B cell (primary cell): ENCODE measurements at regions of chr9 and their contacts with region 1.

Region 1: GRCh38 chr9:94920398-94921091 is 194.0 kb downstream of the AOPEP start:
- DNase-seq: no peak
- ATAC-seq: no peak
- H3K4me3 ChIP-seq: no peak overlapping the region
- H3K4me3 Mint-ChIP-seq: no peak overlapping the region
- H3K27ac ChIP-seq: no peak overlapping the region
- H3K27ac Mint-ChIP-seq: no peak overlapping the region
- H3K4me1 ChIP-seq: no peaks in the 10 kb centered on the region
- H3K4me1 Mint-ChIP-seq: peaks cover 8% of the 10 kb centered on the region
- H3K27me3 ChIP-seq: no peaks in the 10 kb centered on the region
- H3K27me3 Mint-ChIP-seq: no peaks in the 10 kb centered on the region
- CTCF ChIP-seq: no peak

Region 2: DNA sequence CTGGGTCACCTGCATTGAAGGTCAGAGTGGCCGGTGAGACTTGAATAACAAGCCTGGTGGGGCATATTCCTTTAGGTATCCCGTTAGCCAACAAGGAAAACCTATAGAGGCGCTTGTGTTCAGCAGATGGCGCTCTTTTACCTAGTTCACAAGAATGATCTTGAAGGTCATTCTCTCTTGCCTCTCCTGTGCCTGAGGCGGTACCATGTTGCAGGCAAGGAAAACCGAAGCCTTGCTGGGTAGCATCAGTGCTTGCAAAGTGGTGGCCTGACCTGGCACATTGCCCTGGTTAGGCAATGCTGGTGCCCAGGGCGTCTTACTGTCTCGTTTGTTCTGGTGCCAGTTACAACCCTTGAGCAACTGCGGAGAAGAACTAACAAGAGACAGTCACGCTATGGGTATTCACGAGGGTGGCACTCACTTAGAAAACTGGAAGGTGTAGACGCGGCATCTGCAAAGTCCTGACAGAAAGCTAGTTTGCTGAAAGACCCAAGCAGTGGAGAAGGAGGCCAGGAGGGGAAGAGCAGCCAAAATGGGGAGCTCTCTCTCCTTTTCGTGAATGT is 137.4 kb before region 1 on chr9:
- CTCF ChIA-PET with region 1: interaction called, 72 read pairs
- POLR2A ChIA-PET with region 1: no interaction called
- intact Hi-C with region 1: no loop called
- DNase-seq: peak; percentile 53
- ATAC-seq: peak; percentile 47
- H3K4me3 ChIP-seq: no peak overlapping the region
- H3K4me3 Mint-ChIP-seq: no peak overlapping the region
- H3K27ac ChIP-seq: no peak overlapping the region
- H3K27ac Mint-ChIP-seq: no peak overlapping the region
- H3K4me1 ChIP-seq: no peaks in the 10 kb centered on the region
- H3K4me1 Mint-ChIP-seq: peaks cover 7% of the 10 kb centered on the region
- H3K27me3 ChIP-seq: no peaks in the 10 kb centered on the region
- H3K27me3 Mint-ChIP-seq: no peaks in the 10 kb centered on the region
- CTCF ChIP-seq: peak; percentile 59

Region 3: DNA sequence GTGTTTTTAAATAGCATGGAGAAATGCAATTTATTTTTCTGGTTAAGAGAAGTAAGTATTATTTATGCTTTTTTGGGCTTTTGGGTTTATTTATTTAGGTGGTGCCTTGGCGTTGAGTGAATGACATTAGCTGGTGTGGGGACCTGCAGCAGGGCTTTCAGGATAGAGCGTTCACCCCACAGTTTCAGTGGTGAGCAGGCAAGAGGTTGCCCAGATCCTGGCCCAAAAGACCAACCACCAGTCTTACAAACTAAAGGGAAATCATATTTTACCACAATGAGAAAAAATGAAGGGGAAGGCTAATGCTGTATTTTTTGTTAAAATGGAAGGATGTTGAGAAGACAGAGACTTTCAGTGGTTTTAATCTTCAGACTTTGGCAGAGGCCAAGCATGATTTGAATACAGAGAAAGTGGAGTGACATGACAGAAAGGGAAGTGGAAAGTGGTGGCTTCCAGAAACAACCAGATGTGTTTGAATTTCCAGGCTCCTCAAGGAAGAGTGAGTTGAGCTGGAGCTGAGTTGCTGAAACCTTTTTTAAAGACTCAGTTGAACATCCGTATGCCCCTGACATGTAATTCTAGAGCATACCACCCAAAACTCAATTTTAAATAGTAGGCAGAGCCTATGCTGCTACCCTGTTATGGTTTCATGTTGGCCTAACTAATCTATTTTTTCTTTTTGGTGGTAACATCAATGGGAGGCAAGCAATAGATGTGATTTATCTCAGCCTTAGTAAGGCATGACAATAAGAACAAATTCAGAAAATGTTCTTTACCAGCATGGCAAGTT is 99.3 kb before region 1 on chr9:
- CTCF ChIA-PET with region 1: no interaction called
- POLR2A ChIA-PET with region 1: no interaction called
- intact Hi-C with region 1: no loop called
- DNase-seq: peak; percentile 11
- ATAC-seq: no peak
- H3K4me3 ChIP-seq: no peak overlapping the region
- H3K4me3 Mint-ChIP-seq: no peak overlapping the region
- H3K27ac ChIP-seq: no peak overlapping the region
- H3K27ac Mint-ChIP-seq: peak overlapping the region; percentile 70
- H3K4me1 ChIP-seq: peaks cover 0 to 6% of the 10 kb centered on the region in 2 donors
- H3K4me1 Mint-ChIP-seq: peaks cover 8% of the 10 kb centered on the region
- H3K27me3 ChIP-seq: no peaks in the 10 kb centered on the region
- H3K27me3 Mint-ChIP-seq: no peaks in the 10 kb centered on the region
- CTCF ChIP-seq: no peak

Region 4: GRCh38 chr9:94860968-94861871 is 59.3 kb before region 1 on chr9:
- CTCF ChIA-PET with region 1: interaction called, 8 read pairs
- POLR2A ChIA-PET with region 1: no interaction called
- intact Hi-C with region 1: loop called (anchors 5 kb)
- DNase-seq: peak; percentile 90
- ATAC-seq: peak; percentile 91
- H3K4me3 ChIP-seq: peak overlapping the region in 3 of 5 experiments; percentile 17 to 42 (median 22)
- H3K4me3 Mint-ChIP-seq: peak overlapping the region; percentile 65
- H3K27ac ChIP-seq: peak overlapping the region in 1 of 2 donors; percentile 10
- H3K27ac Mint-ChIP-seq: peak overlapping the region; percentile 81
- H3K4me1 ChIP-seq: peaks cover 25 to 26% of the 10 kb centered on the region in 2 donors
- H3K4me1 Mint-ChIP-seq: peaks cover 45% of the 10 kb centered on the region
- H3K27me3 ChIP-seq: no peaks in the 10 kb centered on the region
- H3K27me3 Mint-ChIP-seq: no peaks in the 10 kb centered on the region
- CTCF ChIP-seq: no peak

Region 5: GRCh38 chr9:94882966-94883641 is 37.4 kb before region 1 on chr9:
- CTCF ChIA-PET with region 1: interaction called, 10 read pairs
- POLR2A ChIA-PET with region 1: no interaction called
- intact Hi-C with region 1: no loop called
- DNase-seq: no peak
- ATAC-seq: no peak
- H3K4me3 ChIP-seq: no peak overlapping the region
- H3K4me3 Mint-ChIP-seq: no peak overlapping the region
- H3K27ac ChIP-seq: no peak overlapping the region
- H3K27ac Mint-ChIP-seq: no peak overlapping the region
- H3K4me1 ChIP-seq: peaks cover 13 to 16% of the 10 kb centered on the region in 2 donors
- H3K4me1 Mint-ChIP-seq: peaks cover 30% of the 10 kb centered on the region
- H3K27me3 ChIP-seq: no peaks in the 10 kb centered on the region
- H3K27me3 Mint-ChIP-seq: no peaks in the 10 kb centered on the region
- CTCF ChIP-seq: no peak

Region 6: GRCh38 chr9:95018099-95018936 is 97.8 kb after region 1 on chr9:
- CTCF ChIA-PET with region 1: no interaction called
- POLR2A ChIA-PET with region 1: no interaction called
- intact Hi-C with region 1: no loop called
- DNase-seq: no peak
- ATAC-seq: no peak
- H3K4me3 ChIP-seq: no peak overlapping the region
- H3K4me3 Mint-ChIP-seq: no peak overlapping the region
- H3K27ac ChIP-seq: no peak overlapping the region
- H3K27ac Mint-ChIP-seq: no peak overlapping the region
- H3K4me1 ChIP-seq: no peaks in the 10 kb centered on the region
- H3K4me1 Mint-ChIP-seq: no peaks in the 10 kb centered on the region
- H3K27me3 ChIP-seq: no peaks in the 10 kb centered on the region
- H3K27me3 Mint-ChIP-seq: no peaks in the 10 kb centered on the region
- CTCF ChIP-seq: no peak